ENCODE measurements at regions of chr7 and their contacts with region 1.

Region 1: GRCh38 chr7:50317221-50317678 is 12.7 kb downstream of the IKZF1 start:
- DNase-seq: peak in 4 of 9 experiments; percentile 54 to 93 (median 83)
- ATAC-seq: peak; percentile 72
- H3K4me3 ChIP-seq: peak overlapping the region; percentile 21 to 52
- H3K4me3 Mint-ChIP-seq: peak overlapping the region; percentile 26
- H3K27ac ChIP-seq: peak overlapping the region; percentile 91 to 96
- H3K27ac Mint-ChIP-seq: peak overlapping the region; percentile 96
- H3K4me1 ChIP-seq: peaks cover 98% of the 10 kb centered on the region
- H3K4me1 Mint-ChIP-seq: peaks cover 95% of the 10 kb centered on the region
- H3K27me3 ChIP-seq: no peaks in the 10 kb centered on the region
- H3K27me3 Mint-ChIP-seq: no peaks in the 10 kb centered on the region
- CTCF ChIP-seq: no peak

Region 2: DNA sequence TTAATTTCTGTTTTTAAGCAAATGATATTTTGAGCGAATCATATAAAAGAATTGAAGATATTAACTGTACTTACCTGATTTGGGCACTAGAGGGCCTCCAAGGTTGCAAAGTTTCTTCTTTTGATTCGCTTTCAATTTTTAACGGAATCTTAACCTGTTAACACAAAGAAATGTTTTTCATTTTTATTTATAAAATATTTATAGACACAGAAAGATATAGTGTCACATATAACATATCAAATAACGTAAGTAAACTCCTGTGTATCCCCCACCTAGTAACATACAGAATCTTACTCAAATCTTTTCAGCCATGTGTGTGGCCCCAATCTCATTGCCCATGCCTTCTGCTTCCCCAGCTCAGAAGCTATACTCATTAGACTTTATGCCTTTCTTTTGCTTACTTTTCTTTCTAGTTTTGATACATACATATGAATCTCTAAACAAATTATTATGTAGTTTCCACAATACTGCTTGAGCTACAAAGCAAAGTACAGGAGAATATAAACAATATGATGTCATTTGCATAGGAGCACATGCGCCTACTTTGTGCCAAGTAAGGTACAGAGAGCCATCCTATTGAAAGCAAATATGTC is 174.7 kb before region 1 on chr7:
- CTCF ChIA-PET with region 1: interaction called, 5 read pairs
- POLR2A ChIA-PET with region 1: no interaction called
- intact Hi-C with region 1: loop called in 1 of 2 experiments (anchors 5 kb)
- DNase-seq: peak in 4 of 9 experiments; percentile 38 to 78 (median 59)
- ATAC-seq: peak; percentile 85
- H3K4me3 ChIP-seq: no peak overlapping the region
- H3K4me3 Mint-ChIP-seq: peak overlapping the region; percentile 57
- H3K27ac ChIP-seq: no peak overlapping the region
- H3K27ac Mint-ChIP-seq: peak overlapping the region; percentile 84
- H3K4me1 ChIP-seq: peaks cover 5% of the 10 kb centered on the region
- H3K4me1 Mint-ChIP-seq: peaks cover 15% of the 10 kb centered on the region
- H3K27me3 ChIP-seq: no peaks in the 10 kb centered on the region
- H3K27me3 Mint-ChIP-seq: no peaks in the 10 kb centered on the region
- CTCF ChIP-seq: peak; percentile 91

Region 3: GRCh38 chr7:50304158-50304910 is 12.9 kb before region 1 on chr7 and contains the start of gene IKZF1:
- CTCF ChIA-PET with region 1: interaction called, 78 read pairs
- POLR2A ChIA-PET with region 1: interaction called, 388 read pairs
- intact Hi-C with region 1: loop called (anchors 1 kb)
- DNase-seq: peak; percentile 32 to 82 (median 65)
- ATAC-seq: peak; percentile 39
- H3K4me3 ChIP-seq: peak within 1 kb of the TSS; percentile 90 to 96
- H3K4me3 Mint-ChIP-seq: peak within 1 kb of the TSS; percentile 93
- H3K27ac ChIP-seq: peak within 1 kb of the TSS; percentile 91 to 96
- H3K27ac Mint-ChIP-seq: peak within 1 kb of the TSS; percentile 96
- H3K4me1 ChIP-seq: peaks cover 51% of the 10 kb centered on the region
- H3K4me1 Mint-ChIP-seq: peaks cover 51% of the 10 kb centered on the region
- H3K27me3 ChIP-seq: no peaks in the 10 kb centered on the region
- H3K27me3 Mint-ChIP-seq: no peaks in the 10 kb centered on the region
- CTCF ChIP-seq: no peak
- total RNA-seq, gene IKZF1: 248 TPM

Region 4: DNA sequence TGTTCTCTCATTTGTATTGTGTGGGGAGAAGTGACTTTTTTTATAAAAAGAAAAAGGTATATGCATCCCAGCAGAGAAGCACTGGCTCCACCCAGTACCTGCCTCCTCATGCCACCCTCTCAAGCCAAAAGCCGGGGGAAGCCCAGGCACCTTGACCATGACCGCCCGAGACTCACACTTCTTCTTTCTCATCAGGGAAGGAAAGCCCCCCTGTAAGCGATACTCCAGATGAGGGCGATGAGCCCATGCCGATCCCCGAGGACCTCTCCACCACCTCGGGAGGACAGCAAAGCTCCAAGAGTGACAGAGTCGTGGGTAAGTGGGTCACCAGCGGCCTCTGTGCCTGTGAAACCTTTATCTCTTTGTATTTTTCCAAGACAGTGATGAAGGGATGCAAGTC is 10.2 kb after region 1 on chr7:
- CTCF ChIA-PET with region 1: interaction called, 11 read pairs
- POLR2A ChIA-PET with region 1: interaction called, 388 read pairs
- intact Hi-C with region 1: loop called (anchors 1 to 2 kb)
- DNase-seq: no peak
- ATAC-seq: no peak
- H3K4me3 ChIP-seq: no peak overlapping the region
- H3K4me3 Mint-ChIP-seq: no peak overlapping the region
- H3K27ac ChIP-seq: peak overlapping the region in 1 of 2 experiments; percentile 28
- H3K27ac Mint-ChIP-seq: no peak overlapping the region
- H3K4me1 ChIP-seq: peaks cover 93% of the 10 kb centered on the region
- H3K4me1 Mint-ChIP-seq: peaks cover 88% of the 10 kb centered on the region
- H3K27me3 ChIP-seq: no peaks in the 10 kb centered on the region
- H3K27me3 Mint-ChIP-seq: no peaks in the 10 kb centered on the region
- CTCF ChIP-seq: no peak

Region 5: DNA sequence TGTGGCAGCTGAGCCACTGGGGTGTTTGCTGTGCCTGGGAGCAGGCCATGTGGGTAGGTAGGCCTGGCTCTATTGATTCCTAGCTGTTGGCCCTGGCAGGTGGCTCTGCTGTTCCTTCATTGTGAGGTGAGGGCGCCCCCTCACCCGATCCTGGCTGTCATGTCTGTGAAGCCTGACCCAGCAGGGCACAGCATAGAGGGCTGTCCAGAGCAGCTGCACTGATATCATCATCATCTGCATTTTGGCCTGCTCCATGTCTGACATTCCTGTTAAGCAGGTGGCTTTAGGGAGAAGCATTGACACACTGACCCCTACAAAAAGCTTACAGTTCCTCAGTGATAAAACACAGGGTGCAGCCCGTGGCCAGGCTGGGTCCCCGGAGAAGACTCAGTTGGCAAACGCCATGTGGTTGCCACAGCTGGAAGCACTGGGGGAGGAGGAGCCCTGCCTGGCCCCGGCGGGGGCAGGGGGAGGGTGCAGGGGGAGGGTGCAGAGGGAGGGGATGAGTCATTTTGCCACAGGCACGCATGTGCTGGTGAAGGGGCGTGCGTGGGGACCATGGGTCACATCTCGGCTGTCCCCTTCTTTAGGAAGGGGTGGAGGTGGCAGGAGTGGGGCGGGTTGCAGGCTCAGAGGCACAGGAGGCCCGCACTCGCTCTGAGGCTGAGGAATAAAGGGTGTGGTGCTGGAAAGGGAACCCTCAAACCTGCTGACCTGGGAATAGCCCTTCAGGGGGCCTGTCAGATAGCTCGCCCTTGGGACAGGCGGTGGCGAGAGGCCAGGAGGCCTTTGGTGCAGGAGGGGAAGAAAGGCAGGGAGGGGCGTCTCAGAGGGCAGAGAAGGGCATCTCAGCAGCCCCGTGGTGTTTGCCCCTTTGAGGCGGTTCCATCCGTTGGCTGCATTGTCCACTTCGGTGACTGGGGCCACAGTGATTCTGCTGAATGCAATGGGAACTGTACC is 18.8 kb after region 1 on chr7:
- CTCF ChIA-PET with region 1: interaction called, 121 read pairs
- POLR2A ChIA-PET with region 1: interaction called, 1,039 read pairs
- intact Hi-C with region 1: loop called in 1 of 2 experiments (anchors 2 kb)
- DNase-seq: peak; percentile 55 to 91 (median 84)
- ATAC-seq: peak; percentile 55
- H3K4me3 ChIP-seq: peak overlapping the region; percentile 10 to 19
- H3K4me3 Mint-ChIP-seq: peak overlapping the region; percentile 77
- H3K27ac ChIP-seq: peak overlapping the region; percentile 40 to 90
- H3K27ac Mint-ChIP-seq: no peak overlapping the region
- H3K4me1 ChIP-seq: peaks cover 99% of the 10 kb centered on the region
- H3K4me1 Mint-ChIP-seq: peaks cover 35% of the 10 kb centered on the region
- H3K27me3 ChIP-seq: no peaks in the 10 kb centered on the region
- H3K27me3 Mint-ChIP-seq: no peaks in the 10 kb centered on the region
- CTCF ChIP-seq: no peak

Region 6: GRCh38 chr7:50359995-50360925 is 43.0 kb after region 1 on chr7:
- CTCF ChIA-PET with region 1: interaction called, 494 read pairs
- POLR2A ChIA-PET with region 1: interaction called, 1,039 read pairs
- intact Hi-C with region 1: loop called in 1 of 2 experiments (anchors 2 kb)
- DNase-seq: peak; percentile 62 to 96 (median 82)
- ATAC-seq: peak; percentile 83
- H3K4me3 ChIP-seq: peak overlapping the region in 1 of 2 experiments; percentile 17
- H3K4me3 Mint-ChIP-seq: peak overlapping the region; percentile 76
- H3K27ac ChIP-seq: peak overlapping the region; percentile 78 to 91
- H3K27ac Mint-ChIP-seq: peak overlapping the region; percentile 99
- H3K4me1 ChIP-seq: peaks cover 97% of the 10 kb centered on the region
- H3K4me1 Mint-ChIP-seq: peaks cover 98% of the 10 kb centered on the region
- H3K27me3 ChIP-seq: no peaks in the 10 kb centered on the region
- H3K27me3 Mint-ChIP-seq: no peaks in the 10 kb centered on the region
- CTCF ChIP-seq: no peak